Activated CD4-positive, alpha-beta T cell treated with anti-CD3 and anti-CD28 coated beads for 36 hours (primary cell): ENCODE measurements at regions of chr10 and their contacts with region 1.

Region 1: GRCh38 chr10:6580279-6581029 is 378 bp upstream of the PRKCQ start:
- DNase-seq: peak; percentile 93
- ATAC-seq: peak; percentile 72
- H3K4me3 Mint-ChIP-seq: peak overlapping the region; percentile 89
- H3K27ac Mint-ChIP-seq: peak overlapping the region; percentile 97
- H3K4me1 Mint-ChIP-seq: peaks cover 59% of the 10 kb centered on the region
- H3K27me3 Mint-ChIP-seq: no peaks in the 10 kb centered on the region

Region 2: DNA sequence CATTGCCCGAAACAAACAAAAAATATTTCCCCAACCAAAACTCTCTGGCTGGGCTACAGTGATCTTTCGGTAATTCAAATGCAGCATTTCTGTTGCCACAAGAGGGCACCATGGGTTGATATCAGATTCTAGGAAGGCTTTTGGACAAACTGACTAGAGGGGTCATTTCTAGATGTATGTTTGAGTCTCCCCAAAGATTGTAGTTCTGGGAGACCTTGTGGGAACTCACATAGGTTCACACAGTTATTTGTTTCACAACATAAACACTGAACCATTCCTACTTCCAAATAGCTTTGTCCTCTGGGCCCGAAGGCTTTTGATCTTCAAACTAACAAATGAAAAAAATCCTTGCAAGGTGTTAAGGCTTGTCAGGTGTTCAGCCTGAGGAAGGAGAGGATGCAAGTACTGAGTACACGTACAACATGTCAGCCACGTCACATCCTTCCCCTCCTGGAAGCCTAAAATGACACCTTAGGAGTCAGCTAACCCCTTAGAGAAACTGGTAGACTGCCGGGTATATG is 566.2 kb before region 1 on chr10:
- CTCF ChIA-PET with region 1: no interaction called
- POLR2A ChIA-PET with region 1: no interaction called
- intact Hi-C with region 1: no loop called
- DNase-seq: peak; percentile 79
- ATAC-seq: peak; percentile 76
- H3K4me3 Mint-ChIP-seq: peak overlapping the region; percentile 14
- H3K27ac Mint-ChIP-seq: peak overlapping the region; percentile 87
- H3K4me1 Mint-ChIP-seq: peaks cover 67% of the 10 kb centered on the region
- H3K27me3 Mint-ChIP-seq: no peaks in the 10 kb centered on the region

Region 3: DNA sequence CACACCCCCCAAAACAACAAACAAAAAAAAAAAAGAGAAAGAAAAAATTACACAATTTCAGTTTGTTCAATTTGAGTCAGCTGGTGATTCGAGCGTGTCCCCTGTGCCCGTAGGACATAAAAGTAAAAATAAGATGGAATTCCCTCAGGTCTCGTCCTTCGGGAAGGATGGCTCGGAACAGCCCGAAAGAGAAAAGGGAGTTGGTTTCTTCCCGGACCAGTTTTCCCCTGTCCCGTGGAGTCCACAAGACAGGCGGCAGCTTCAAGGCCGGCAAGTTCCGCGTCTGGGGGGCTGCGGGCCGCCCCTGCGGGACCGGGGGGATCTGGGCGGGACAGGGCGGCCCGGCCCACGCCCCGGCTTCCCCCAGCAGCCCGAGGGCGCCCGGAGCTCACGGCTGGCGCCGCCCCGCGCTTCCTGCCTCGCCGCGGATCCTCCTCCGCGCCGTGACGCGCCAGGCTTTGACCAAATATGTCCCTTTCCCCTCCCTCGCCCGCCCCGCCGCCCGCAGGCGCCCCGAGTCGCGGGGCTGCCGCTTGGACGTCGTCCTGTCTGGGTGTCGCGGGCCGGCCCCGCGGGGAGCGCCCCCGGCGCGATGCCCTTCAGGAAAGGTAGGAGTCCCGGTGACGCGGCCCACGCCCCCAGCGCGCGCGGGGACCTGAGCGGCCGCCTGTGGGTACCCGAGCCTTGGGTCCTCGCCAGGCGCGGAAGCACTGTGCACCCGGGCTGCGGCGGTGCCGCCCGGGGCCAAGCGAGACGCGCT is 435.9 kb before region 1 on chr10:
- CTCF ChIA-PET with region 1: no interaction called
- POLR2A ChIA-PET with region 1: no interaction called
- intact Hi-C with region 1: loop called in 1 of 2 experiments (anchors 5 kb)
- DNase-seq: peak; percentile 94
- ATAC-seq: peak; percentile 71
- H3K4me3 Mint-ChIP-seq: peak overlapping the region; percentile 81
- H3K27ac Mint-ChIP-seq: peak overlapping the region; percentile 90
- H3K4me1 Mint-ChIP-seq: peaks cover 79% of the 10 kb centered on the region
- H3K27me3 Mint-ChIP-seq: no peaks in the 10 kb centered on the region

Region 4: DNA sequence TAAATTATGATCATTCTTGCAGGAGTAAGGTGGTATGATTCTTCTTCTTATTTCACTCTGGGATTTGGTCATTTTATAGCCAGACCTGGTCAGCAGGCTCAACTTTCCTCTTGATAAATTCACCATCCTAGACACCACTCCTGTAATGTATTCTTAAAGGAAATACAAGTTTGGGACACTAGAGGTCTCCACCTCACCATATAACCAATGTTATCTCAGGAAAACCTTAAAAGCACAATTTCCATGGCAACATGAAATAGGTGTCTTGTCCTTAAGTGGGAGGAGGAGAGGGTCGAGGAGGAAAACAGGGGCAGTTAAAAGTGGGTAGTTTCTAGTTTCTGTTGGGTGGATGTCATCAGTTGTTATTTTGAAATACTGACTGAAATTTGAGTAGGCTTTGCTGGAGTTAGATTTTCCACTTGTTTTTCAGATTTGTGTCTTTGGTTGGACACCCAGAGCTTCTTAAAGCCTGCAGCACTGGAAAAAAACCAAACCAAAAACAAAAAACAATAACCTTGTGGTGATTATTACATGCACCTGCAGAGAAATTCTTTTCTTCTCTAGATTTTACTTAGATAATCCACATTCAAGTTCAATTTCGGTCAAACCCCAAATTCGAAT is 163.5 kb before region 1 on chr10:
- CTCF ChIA-PET with region 1: interaction called, 5 read pairs
- POLR2A ChIA-PET with region 1: no interaction called
- intact Hi-C with region 1: loop called (anchors 1 to 2 kb)
- DNase-seq: no peak
- ATAC-seq: peak; percentile 73
- H3K4me3 Mint-ChIP-seq: no peak overlapping the region
- H3K27ac Mint-ChIP-seq: no peak overlapping the region
- H3K4me1 Mint-ChIP-seq: no peaks in the 10 kb centered on the region
- H3K27me3 Mint-ChIP-seq: no peaks in the 10 kb centered on the region

Region 5: DNA sequence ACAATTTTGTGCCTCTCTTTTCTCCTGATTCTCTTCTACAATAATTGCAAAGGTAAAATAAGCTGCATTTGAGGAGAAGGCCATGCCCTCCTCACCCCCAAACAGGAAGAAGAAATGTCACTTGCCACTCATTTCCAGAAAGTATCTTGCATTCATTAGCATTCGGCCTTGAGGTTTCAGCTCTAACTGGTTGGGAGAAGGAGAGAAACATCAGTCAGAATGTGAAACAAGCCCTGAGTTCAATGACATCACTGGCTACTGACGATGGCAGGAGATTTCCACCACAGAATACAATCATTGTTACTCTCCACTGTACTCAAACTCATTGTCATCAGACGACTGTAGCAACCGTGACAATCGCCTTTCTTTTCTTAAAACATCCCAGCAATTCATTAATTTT is 73.1 kb before region 1 on chr10:
- CTCF ChIA-PET with region 1: interaction called, 3 read pairs
- POLR2A ChIA-PET with region 1: no interaction called
- intact Hi-C with region 1: loop called in 1 of 2 experiments (anchors 2 kb)
- DNase-seq: peak; percentile 72
- ATAC-seq: peak; percentile 93
- H3K4me3 Mint-ChIP-seq: peak overlapping the region; percentile 45
- H3K27ac Mint-ChIP-seq: peak overlapping the region; percentile 94
- H3K4me1 Mint-ChIP-seq: peaks cover 76% of the 10 kb centered on the region
- H3K27me3 Mint-ChIP-seq: no peaks in the 10 kb centered on the region

Region 6: GRCh38 chr10:6593241-6593671 is 12.8 kb after region 1 on chr10:
- CTCF ChIA-PET with region 1: interaction called, 12 read pairs
- POLR2A ChIA-PET with region 1: interaction called, 9 read pairs
- intact Hi-C with region 1: loop called in 1 of 2 experiments (anchors 1 kb)
- DNase-seq: peak; percentile 37
- ATAC-seq: peak; percentile 73
- H3K4me3 Mint-ChIP-seq: peak overlapping the region; percentile 33
- H3K27ac Mint-ChIP-seq: peak overlapping the region; percentile 87
- H3K4me1 Mint-ChIP-seq: peaks cover 92% of the 10 kb centered on the region
- H3K27me3 Mint-ChIP-seq: no peaks in the 10 kb centered on the region

Region 7: GRCh38 chr10:6667679-6668270 is 87.3 kb after region 1 on chr10:
- CTCF ChIA-PET with region 1: interaction called, 39 read pairs
- POLR2A ChIA-PET with region 1: interaction called, 3 read pairs
- intact Hi-C with region 1: loop called (anchors 1 kb)
- DNase-seq: peak; percentile 73
- ATAC-seq: peak; percentile 25
- H3K4me3 Mint-ChIP-seq: no peak overlapping the region
- H3K27ac Mint-ChIP-seq: no peak overlapping the region
- H3K4me1 Mint-ChIP-seq: peaks cover 25% of the 10 kb centered on the region
- H3K27me3 Mint-ChIP-seq: no peaks in the 10 kb centered on the region

Region 8: DNA sequence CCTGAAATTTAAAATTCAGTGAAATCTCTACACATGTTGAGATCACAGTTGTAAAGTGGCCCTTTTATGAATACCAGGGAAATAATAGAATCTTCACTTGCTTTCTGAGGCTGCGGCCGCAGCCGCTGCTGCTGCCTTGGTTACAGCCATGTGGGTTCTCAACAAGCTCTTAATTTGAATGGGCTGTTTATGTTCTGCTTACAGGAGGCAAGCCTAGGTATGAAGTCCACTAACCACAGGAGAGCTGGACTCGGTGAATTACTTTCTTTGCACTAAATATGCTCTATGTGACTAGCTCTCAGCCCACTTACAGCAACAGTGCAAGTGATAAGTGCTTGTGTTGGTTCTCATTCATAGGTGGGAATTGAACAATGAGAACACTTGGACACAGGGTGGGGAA is 419.6 kb after region 1 on chr10:
- CTCF ChIA-PET with region 1: no interaction called
- POLR2A ChIA-PET with region 1: no interaction called
- intact Hi-C with region 1: no loop called
- DNase-seq: no peak
- ATAC-seq: no peak
- H3K4me3 Mint-ChIP-seq: no peak overlapping the region
- H3K27ac Mint-ChIP-seq: no peak overlapping the region
- H3K4me1 Mint-ChIP-seq: no peaks in the 10 kb centered on the region
- H3K27me3 Mint-ChIP-seq: peaks cover 4% of the 10 kb centered on the region